ENCODE measurements at regions of chr1 and their contacts with region 1.

Region 1: DNA sequence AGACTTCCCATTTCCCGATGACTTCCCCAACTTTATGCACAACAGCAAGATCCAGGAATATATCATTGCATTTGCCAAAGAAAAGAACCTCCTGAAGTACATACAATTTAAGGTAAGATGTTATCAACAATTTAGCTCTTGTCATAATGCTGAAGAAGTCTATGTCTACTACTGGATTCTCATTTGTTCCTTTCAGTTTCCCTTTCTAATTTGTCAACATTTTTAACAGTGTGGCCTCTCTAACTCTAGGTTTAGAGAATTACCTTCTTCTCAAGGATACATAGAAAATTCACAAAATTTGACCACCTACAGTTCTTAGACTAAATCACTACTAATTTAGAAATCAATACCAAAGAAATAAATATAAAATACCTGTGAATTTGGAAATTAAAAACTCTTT is 13.2 kb downstream of the FMO3 start:
- DNase-seq: no peak
- ATAC-seq: no peak
- H3K4me3 ChIP-seq: no peak overlapping the region
- H3K27ac ChIP-seq: no peak overlapping the region
- H3K4me1 ChIP-seq: peaks cover 0 to 9% (median 1%) of the 10 kb centered on the region in 12 donors
- H3K27me3 ChIP-seq: no peaks in the 10 kb centered on the region
- CTCF ChIP-seq: no peak
- POLR2A ChIP-seq: no peak

Region 2: DNA sequence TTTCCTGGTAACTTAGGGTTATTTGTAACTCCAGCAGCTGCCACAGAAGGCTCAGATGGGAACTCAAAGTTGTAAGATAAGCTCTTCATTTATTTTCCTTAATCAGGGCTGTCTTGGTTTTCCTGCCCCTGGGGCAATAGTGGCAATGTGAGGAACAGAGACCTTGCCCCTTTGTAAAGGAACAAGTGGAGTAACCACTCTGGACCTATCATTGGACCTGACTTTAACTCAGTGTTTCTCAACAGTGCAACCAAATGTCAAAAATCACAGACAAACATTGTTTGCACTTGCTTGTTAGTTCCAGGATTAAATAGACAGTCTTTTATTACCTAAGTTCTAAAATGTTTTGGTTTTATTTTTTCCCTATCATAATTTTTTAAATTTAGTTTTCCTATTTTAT is 16.0 kb before region 1 on chr1:
- intact Hi-C with region 1: loop called in 1 of 10 experiments (anchors 2 kb)
- DNase-seq: no peak
- ATAC-seq: no peak
- H3K4me3 ChIP-seq: no peak overlapping the region
- H3K27ac ChIP-seq: no peak overlapping the region
- H3K4me1 ChIP-seq: peaks cover 0 to 15% (median 1%) of the 10 kb centered on the region in 12 donors
- H3K27me3 ChIP-seq: no peaks in the 10 kb centered on the region
- CTCF ChIP-seq: no peak
- POLR2A ChIP-seq: no peak

Region 3: DNA sequence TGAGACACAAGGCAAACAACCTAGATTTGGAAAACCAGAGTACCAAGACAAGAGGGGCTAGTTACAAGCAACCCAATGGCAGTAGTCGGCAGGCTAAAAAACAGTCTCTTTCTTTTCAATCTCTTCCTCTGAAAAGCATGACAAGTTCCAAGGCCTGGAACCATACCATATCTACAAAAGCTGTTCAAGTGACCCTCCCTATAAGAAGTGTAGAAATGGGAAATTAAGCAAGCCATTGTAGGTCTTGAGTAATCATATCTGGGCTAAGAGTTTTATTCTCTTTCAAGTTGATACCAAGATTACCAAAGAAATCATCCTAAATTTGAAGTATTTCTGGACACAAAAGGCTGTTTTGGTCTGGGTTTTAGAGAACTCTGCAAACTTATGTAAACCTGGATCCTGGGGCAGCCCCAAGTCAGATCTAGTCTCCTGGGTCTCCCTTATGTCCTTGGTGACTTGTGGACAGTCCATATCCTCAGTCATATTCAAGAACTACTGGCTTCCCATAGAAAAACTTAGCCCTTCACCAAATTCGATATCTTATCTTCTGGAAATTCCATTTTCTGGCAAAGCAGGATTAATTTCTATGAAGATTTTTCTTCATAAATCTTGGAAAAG is 11.5 kb after region 1 on chr1:
- intact Hi-C with region 1: no loop called
- DNase-seq: no peak
- ATAC-seq: no peak
- H3K4me3 ChIP-seq: no peak overlapping the region
- H3K27ac ChIP-seq: peak overlapping the region in 7 of 12 donors; percentile 5 to 77 (median 35)
- H3K4me1 ChIP-seq: peaks cover 0 to 29% (median 0%) of the 10 kb centered on the region in 12 donors
- H3K27me3 ChIP-seq: no peaks in the 10 kb centered on the region
- CTCF ChIP-seq: no peak
- POLR2A ChIP-seq: no peak

Region 4: GRCh38 chr1:171204296-171204695 is 100.4 kb after region 1 on chr1:
- intact Hi-C with region 1: loop called in 1 of 10 experiments (anchors 5 kb)
- DNase-seq: no peak
- ATAC-seq: no peak
- H3K4me3 ChIP-seq: no peak overlapping the region
- H3K27ac ChIP-seq: no peak overlapping the region
- H3K4me1 ChIP-seq: peaks cover 0 to 20% (median under 1%) of the 10 kb centered on the region in 12 donors
- H3K27me3 ChIP-seq: no peaks in the 10 kb centered on the region
- CTCF ChIP-seq: no peak
- POLR2A ChIP-seq: no peak